ENCODE measurements at regions of chr9 and their contacts with region 1.

Region 1: GRCh38 chr9:12554636-12555035 is 138.5 kb upstream of the TYRP1 start:
- DNase-seq: no peak
- H3K4me3 Mint-ChIP-seq: no peak overlapping the region
- H3K27ac Mint-ChIP-seq: no peak overlapping the region
- H3K4me1 Mint-ChIP-seq: no peaks in the 10 kb centered on the region
- H3K27me3 Mint-ChIP-seq: no peaks in the 10 kb centered on the region

Region 2: DNA sequence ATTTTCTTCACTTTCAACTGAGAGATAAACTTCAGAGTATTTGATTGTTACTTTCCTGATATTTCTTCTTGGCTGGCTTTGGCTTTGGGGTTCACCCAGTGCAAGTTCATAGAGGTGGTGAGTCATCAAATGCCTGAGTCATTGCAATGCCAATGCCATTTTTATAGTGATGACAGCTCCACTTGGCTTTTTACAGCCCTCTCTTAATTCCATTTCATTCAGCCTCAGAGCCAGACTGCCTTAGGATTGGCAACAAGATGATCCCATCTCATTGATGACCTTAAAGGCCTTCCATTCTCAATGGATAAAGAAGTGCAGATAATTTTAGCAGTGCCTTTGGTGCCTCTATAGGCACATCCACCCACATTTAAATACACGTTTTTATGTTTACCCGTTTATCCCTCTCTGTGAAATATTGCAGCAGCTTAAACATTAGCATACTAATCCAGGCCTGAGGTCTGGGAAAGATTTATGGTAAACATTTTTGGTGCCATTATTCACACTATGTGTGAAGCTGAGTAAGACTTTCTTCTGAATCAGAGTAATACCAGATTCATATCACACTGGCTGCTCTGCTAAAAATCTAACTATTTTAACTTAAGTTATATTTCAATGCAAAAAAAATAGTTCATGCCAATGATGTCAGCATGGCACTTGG is 49.7 kb after region 1 on chr9:
- intact Hi-C with region 1: loop called (anchors 10 kb)
- DNase-seq: no peak
- H3K4me3 Mint-ChIP-seq: no peak overlapping the region
- H3K27ac Mint-ChIP-seq: no peak overlapping the region
- H3K4me1 Mint-ChIP-seq: no peaks in the 10 kb centered on the region
- H3K27me3 Mint-ChIP-seq: no peaks in the 10 kb centered on the region

Region 3: GRCh38 chr9:12759761-12760160 is 205.1 kb after region 1 on chr9:
- intact Hi-C with region 1: no loop called
- DNase-seq: no peak
- H3K4me3 Mint-ChIP-seq: no peak overlapping the region
- H3K27ac Mint-ChIP-seq: no peak overlapping the region
- H3K4me1 Mint-ChIP-seq: no peaks in the 10 kb centered on the region
- H3K27me3 Mint-ChIP-seq: no peaks in the 10 kb centered on the region

Measured in activated T-helper 1 cell treated with anti-CD3 and anti-CD28 coated beads, Interleukin-12 subunit alpha, Interleukin-12 subunit beta, Interleukin-2, Interleukin-4 antibody, amounts not matched to agents 30 ng/mL and 10 ng/mL and 1 ng/mL, durations not matched to agents 14 hours and 24 hours and 36 hours (primary cell).